Gastrocnemius medialis (tissue), 4 donors: ENCODE measurements at regions of chr9 and their contacts with region 1.

Region 1: GRCh38 chr9:27377147-27377807 is 80.3 kb upstream of the EQTN start:
- DNase-seq: peak; percentile 49 to 65
- ATAC-seq: peak; percentile 98 to 99
- H3K4me3 ChIP-seq: no peak overlapping the region
- H3K27ac ChIP-seq: peak overlapping the region; percentile 68 to 78 (median 74)
- H3K4me1 ChIP-seq: peaks cover 35 to 44% of the 10 kb centered on the region in 2 donors
- H3K27me3 ChIP-seq: no peaks in the 10 kb centered on the region
- CTCF ChIP-seq: no peak
- POLR2A ChIP-seq: no peak

Region 2: GRCh38 chr9:26955921-26956859 is 421.1 kb before region 1 on chr9 and contains the start of gene IFT74:
- in situ Hi-C with region 1: no loop called
- intact Hi-C with region 1: loop called (anchors 10 kb)
- DNase-seq: peak; percentile 96 to 97
- ATAC-seq: peak; percentile 99
- H3K4me3 ChIP-seq: peak within 1 kb of the TSS; percentile 61 to 74 (median 70)
- H3K27ac ChIP-seq: peak within 1 kb of the TSS; percentile 82 to 90 (median 85)
- H3K4me1 ChIP-seq: peaks cover 14 to 18% of the 10 kb centered on the region in 2 donors
- H3K27me3 ChIP-seq: no peaks in the 10 kb centered on the region
- CTCF ChIP-seq: no peak
- POLR2A ChIP-seq: peak; percentile 23 to 60
- total RNA-seq, gene IFT74: 4.9 to 15.2 (median 13.0) TPM

Region 3: GRCh38 chr9:27154908-27155307 is 222.4 kb before region 1 on chr9:
- in situ Hi-C with region 1: no loop called
- intact Hi-C with region 1: no loop called
- DNase-seq: no peak
- ATAC-seq: no peak
- H3K4me3 ChIP-seq: no peak overlapping the region
- H3K27ac ChIP-seq: no peak overlapping the region
- H3K4me1 ChIP-seq: no peaks in the 10 kb centered on the region
- H3K27me3 ChIP-seq: no peaks in the 10 kb centered on the region
- CTCF ChIP-seq: no peak
- POLR2A ChIP-seq: no peak

Region 4: DNA sequence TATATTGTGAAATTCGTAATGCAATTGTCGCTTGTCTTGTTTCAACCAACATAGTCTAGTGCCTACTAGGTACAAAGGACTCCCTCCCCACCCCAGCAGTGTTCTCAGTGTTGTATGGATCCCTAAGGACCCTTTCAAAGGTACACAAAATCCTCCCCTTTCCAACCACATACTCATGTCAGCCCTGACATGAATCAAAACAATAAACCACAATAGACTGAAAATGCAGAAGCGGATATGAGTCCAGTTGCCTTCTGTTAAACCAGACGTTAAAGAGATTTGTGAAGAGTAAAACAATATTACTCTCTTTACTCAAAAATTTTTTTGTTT is 64.4 kb after region 1 on chr9:
- in situ Hi-C with region 1: loop called in 1 of 4 experiments (anchors 10 kb)
- intact Hi-C with region 1: no loop called
- DNase-seq: no peak
- ATAC-seq: no peak
- H3K4me3 ChIP-seq: no peak overlapping the region
- H3K27ac ChIP-seq: no peak overlapping the region
- H3K4me1 ChIP-seq: peaks cover 0 to 7% of the 10 kb centered on the region in 2 donors
- H3K27me3 ChIP-seq: no peaks in the 10 kb centered on the region
- CTCF ChIP-seq: no peak
- POLR2A ChIP-seq: no peak

Region 5: DNA sequence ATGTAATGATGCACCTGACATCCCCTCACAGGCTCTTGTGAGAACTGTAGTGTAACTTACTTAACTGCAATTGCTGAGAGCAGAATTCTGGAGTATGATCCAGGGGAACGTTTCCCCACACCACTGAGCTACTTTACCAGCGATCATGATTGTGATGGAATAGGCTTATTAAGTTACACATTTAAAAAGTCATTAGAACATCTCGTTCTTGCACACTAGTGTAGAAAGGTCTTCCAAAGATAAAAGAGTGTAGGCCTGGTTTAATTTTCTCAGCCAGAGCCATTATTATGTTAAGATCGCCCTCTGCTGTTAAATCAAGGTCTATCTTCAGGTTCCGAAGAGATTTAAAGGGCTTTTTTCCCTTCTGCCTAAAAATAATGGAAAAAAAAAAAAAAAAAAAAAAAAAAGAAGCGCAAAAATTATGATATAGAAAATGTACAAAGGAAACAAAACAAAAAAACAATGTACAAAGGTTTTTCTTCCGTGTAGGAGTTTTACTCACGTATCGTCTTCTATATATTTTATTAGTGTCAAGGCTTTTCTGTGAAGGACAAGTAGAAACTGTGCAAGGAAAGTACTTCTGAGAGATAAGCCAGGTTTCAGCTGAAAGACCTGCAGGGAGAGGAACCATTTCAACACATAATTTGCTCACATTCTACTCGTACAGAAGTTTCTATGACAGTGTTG is 170.9 kb after region 1 on chr9:
- in situ Hi-C with region 1: loop called in 1 of 4 experiments (anchors 10 kb)
- intact Hi-C with region 1: no loop called
- DNase-seq: peak; percentile 51 to 69
- ATAC-seq: peak; percentile 95 to 96
- H3K4me3 ChIP-seq: no peak overlapping the region
- H3K27ac ChIP-seq: peak overlapping the region; percentile 79 to 86 (median 84)
- H3K4me1 ChIP-seq: peaks cover 14 to 24% of the 10 kb centered on the region in 2 donors
- H3K27me3 ChIP-seq: no peaks in the 10 kb centered on the region
- CTCF ChIP-seq: peak; percentile 38 to 58 (median 54)
- POLR2A ChIP-seq: peak in 1 of 2 donors; percentile 59